Naive thymus-derived CD4-positive, alpha-beta T cell (primary cell): ENCODE measurements at regions of chr5 and their contacts with region 1.

Region 1: GRCh38 chr5:72307968-72308852 is 11.8 kb downstream of the MRPS27 start:
- DNase-seq: peak; percentile 91 to 97 (median 95)
- ATAC-seq: peak; percentile 98
- H3K4me3 ChIP-seq: peak overlapping the region; percentile 93
- H3K4me3 Mint-ChIP-seq: peak overlapping the region; percentile 78 to 94 (median 92)
- H3K27ac ChIP-seq: peak overlapping the region; percentile 95
- H3K27ac Mint-ChIP-seq: peak overlapping the region; percentile 84 to 97 (median 91)
- H3K4me1 ChIP-seq: peaks cover 3 to 12% of the 10 kb centered on the region in 2 donors
- H3K4me1 Mint-ChIP-seq: peaks cover 9 to 38% (median 29%) of the 10 kb centered on the region in 7 donors
- H3K27me3 ChIP-seq: no peaks in the 10 kb centered on the region
- H3K27me3 Mint-ChIP-seq: no peaks in the 10 kb centered on the region

Region 2: GRCh38 chr5:71586941-71587765 is 721.1 kb before region 1 on chr5 and contains the start of gene MCCC2:
- CTCF ChIA-PET with region 1: no interaction called
- POLR2A ChIA-PET with region 1: no interaction called
- intact Hi-C with region 1: loop called (anchors 5 kb)
- DNase-seq: peak; percentile 91 to 95 (median 95)
- ATAC-seq: peak; percentile 99
- H3K4me3 ChIP-seq: peak within 1 kb of the TSS; percentile 98
- H3K4me3 Mint-ChIP-seq: peak within 1 kb of the TSS; percentile 87 to 99 (median 94)
- H3K27ac ChIP-seq: peak within 1 kb of the TSS; percentile 87
- H3K27ac Mint-ChIP-seq: peak within 1 kb of the TSS; percentile 85 to 99 (median 97)
- H3K4me1 ChIP-seq: peaks cover 16 to 34% of the 10 kb centered on the region in 2 donors
- H3K4me1 Mint-ChIP-seq: peaks cover 26 to 49% (median 36%) of the 10 kb centered on the region in 7 donors
- H3K27me3 ChIP-seq: no peaks in the 10 kb centered on the region
- H3K27me3 Mint-ChIP-seq: no peaks in the 10 kb centered on the region
- total RNA-seq, gene MCCC2: 22.4 to 41.0 (median 29.8) TPM

Region 3: DNA sequence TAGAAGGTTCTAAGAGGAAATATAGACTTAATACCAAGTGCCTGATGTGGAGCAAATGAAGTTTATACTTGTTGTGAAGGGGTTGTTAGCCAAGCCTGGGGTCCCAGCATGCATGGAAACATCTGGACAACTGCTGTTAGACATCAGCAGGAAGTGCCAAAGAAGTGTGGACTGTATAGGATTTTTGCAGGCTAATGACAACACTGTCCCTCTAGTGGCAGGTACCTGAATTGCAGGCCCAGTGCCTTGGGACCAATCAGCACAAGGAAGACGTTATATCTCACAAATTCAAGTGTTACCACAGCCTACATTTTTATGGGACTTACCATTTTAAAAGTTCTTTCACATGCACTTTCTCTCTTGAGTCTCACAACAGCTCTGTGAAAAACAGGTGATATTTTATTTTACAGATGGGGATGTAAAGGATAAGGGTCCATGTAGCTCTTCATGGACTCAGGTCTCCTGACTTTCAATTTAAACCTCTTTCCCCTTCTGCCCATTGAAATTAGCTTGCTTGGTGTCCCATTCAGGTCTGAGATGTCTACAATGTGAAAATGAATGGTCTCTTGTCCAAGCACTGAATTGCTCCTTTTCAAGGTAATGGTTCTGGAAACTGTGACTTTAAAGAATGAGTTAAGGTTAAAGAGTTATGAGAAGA is 289.9 kb before region 1 on chr5:
- CTCF ChIA-PET with region 1: interaction called, 5 read pairs
- POLR2A ChIA-PET with region 1: no interaction called
- intact Hi-C with region 1: loop called in 1 of 2 experiments (anchors 1 kb)
- DNase-seq: peak in 8 of 9 donors; percentile 14 to 55 (median 36)
- ATAC-seq: peak; percentile 72
- H3K4me3 ChIP-seq: no peak overlapping the region
- H3K4me3 Mint-ChIP-seq: no peak overlapping the region
- H3K27ac ChIP-seq: no peak overlapping the region
- H3K27ac Mint-ChIP-seq: no peak overlapping the region
- H3K4me1 ChIP-seq: no peaks in the 10 kb centered on the region
- H3K4me1 Mint-ChIP-seq: peaks cover 0 to 1% (median 0%) of the 10 kb centered on the region in 7 donors
- H3K27me3 ChIP-seq: no peaks in the 10 kb centered on the region
- H3K27me3 Mint-ChIP-seq: peaks cover 4 to 43% (median 34%) of the 10 kb centered on the region in 5 donors

Region 4: DNA sequence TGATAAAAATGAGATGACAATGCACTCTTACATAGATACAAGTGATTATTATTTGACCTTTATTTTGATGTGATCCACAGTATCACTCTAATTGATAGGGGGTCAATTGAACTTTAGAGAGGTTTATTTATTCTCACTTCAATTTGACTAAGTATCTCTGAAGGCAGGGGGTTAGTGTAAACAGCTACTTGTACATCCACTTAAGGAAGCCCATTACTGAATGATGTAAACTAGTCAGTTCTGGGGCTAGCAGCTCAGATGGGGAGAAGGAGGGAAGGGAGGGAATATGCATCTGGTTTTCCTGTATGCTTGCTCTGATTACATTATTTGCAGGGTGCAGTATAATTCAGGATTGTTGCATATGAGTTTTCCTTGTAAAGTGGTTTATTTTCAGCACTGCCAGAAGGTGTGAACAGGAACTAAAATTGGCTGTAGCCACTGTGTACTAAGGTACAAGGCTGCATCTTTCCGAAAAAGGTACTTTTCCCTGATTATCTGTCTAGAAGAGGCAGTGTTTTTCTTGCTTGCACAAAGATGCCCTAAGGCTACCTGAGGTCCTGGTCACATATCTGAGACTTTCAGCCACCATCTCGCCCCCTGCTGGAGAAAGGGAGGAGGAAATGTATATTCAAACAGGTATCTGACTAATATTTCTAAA is 39.3 kb before region 1 on chr5:
- CTCF ChIA-PET with region 1: no interaction called
- POLR2A ChIA-PET with region 1: no interaction called
- intact Hi-C with region 1: loop called in 1 of 2 experiments (anchors 2 kb)
- DNase-seq: peak in 4 of 9 donors; percentile 2 to 22 (median 12)
- ATAC-seq: peak; percentile 54
- H3K4me3 ChIP-seq: no peak overlapping the region
- H3K4me3 Mint-ChIP-seq: no peak overlapping the region
- H3K27ac ChIP-seq: no peak overlapping the region
- H3K27ac Mint-ChIP-seq: peak overlapping the region in 1 of 9 donors; percentile 3
- H3K4me1 ChIP-seq: no peaks in the 10 kb centered on the region
- H3K4me1 Mint-ChIP-seq: peaks cover 0 to 21% (median 14%) of the 10 kb centered on the region in 7 donors
- H3K27me3 ChIP-seq: no peaks in the 10 kb centered on the region
- H3K27me3 Mint-ChIP-seq: no peaks in the 10 kb centered on the region

Region 5: DNA sequence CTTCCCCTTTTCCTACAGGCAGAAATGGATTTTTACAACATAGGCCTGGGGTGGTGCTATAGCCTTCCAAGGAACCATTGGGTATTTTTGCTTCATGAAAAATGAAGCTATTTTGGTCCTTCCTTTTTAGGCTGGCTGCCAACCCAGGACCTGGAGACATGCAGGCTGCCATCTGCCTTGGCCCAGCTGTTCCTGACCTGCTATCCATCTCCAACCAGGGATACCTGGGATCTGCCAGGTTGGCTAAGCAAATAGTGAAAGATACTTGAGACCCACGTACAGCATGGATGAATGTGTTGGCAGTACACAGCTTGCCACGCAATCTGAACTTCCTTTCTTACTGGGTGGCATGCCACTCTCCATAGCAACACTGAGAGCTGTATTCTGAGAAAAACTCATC is 19.3 kb before region 1 on chr5:
- CTCF ChIA-PET with region 1: no interaction called
- POLR2A ChIA-PET with region 1: no interaction called
- intact Hi-C with region 1: no loop called
- DNase-seq: no peak
- ATAC-seq: no peak
- H3K4me3 ChIP-seq: no peak overlapping the region
- H3K4me3 Mint-ChIP-seq: no peak overlapping the region
- H3K27ac ChIP-seq: no peak overlapping the region
- H3K27ac Mint-ChIP-seq: peak overlapping the region in 1 of 9 donors; percentile 24
- H3K4me1 ChIP-seq: no peaks in the 10 kb centered on the region
- H3K4me1 Mint-ChIP-seq: peaks cover 0 to 7% (median 0%) of the 10 kb centered on the region in 7 donors
- H3K27me3 ChIP-seq: no peaks in the 10 kb centered on the region
- H3K27me3 Mint-ChIP-seq: no peaks in the 10 kb centered on the region

Region 6: DNA sequence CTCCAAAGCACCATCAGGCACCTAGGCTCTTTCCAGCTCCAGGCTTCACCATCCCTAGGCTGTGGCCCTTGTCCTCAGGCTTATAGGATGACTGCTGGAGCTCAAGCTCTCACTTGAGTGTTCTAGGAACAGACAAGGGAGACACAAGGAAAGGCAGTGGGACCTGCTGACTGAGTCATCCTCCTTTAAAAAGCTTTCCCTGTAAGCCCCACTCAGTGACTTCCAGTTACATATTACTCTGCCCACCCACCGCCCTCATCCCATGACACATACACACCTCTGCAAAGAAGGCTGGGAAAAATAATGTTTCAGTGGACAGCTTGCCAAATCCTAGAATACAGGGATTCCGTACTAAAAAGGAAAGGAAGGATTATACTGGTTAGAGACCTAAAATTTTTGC is 353.2 kb after region 1 on chr5:
- CTCF ChIA-PET with region 1: no interaction called
- POLR2A ChIA-PET with region 1: no interaction called
- intact Hi-C with region 1: no loop called
- DNase-seq: no peak
- ATAC-seq: no peak
- H3K4me3 ChIP-seq: no peak overlapping the region
- H3K4me3 Mint-ChIP-seq: no peak overlapping the region
- H3K27ac ChIP-seq: no peak overlapping the region
- H3K27ac Mint-ChIP-seq: no peak overlapping the region
- H3K4me1 ChIP-seq: no peaks in the 10 kb centered on the region
- H3K4me1 Mint-ChIP-seq: no peaks in the 10 kb centered on the region
- H3K27me3 ChIP-seq: no peaks in the 10 kb centered on the region
- H3K27me3 Mint-ChIP-seq: peaks cover 0 to 27% (median 13%) of the 10 kb centered on the region in 5 donors

Region 7: GRCh38 chr5:72847989-72848473 is 539.8 kb after region 1 on chr5:
- CTCF ChIA-PET with region 1: no interaction called
- POLR2A ChIA-PET with region 1: no interaction called
- intact Hi-C with region 1: loop called in 1 of 2 experiments (anchors 1 kb)
- DNase-seq: peak; percentile 67 to 86 (median 83)
- ATAC-seq: peak; percentile 94
- H3K4me3 ChIP-seq: peak overlapping the region; percentile 93
- H3K4me3 Mint-ChIP-seq: peak overlapping the region; percentile 92 to 99 (median 98)
- H3K27ac ChIP-seq: peak overlapping the region; percentile 86
- H3K27ac Mint-ChIP-seq: peak overlapping the region; percentile 93 to 98 (median 96)
- H3K4me1 ChIP-seq: peaks cover 24 to 31% of the 10 kb centered on the region in 2 donors
- H3K4me1 Mint-ChIP-seq: peaks cover 30 to 88% (median 64%) of the 10 kb centered on the region in 7 donors
- H3K27me3 ChIP-seq: no peaks in the 10 kb centered on the region
- H3K27me3 Mint-ChIP-seq: peaks cover 0 to 16% (median 0%) of the 10 kb centered on the region in 5 donors